ENCODE measurements at regions of chr10 and their contacts with region 1.

Region 1: DNA sequence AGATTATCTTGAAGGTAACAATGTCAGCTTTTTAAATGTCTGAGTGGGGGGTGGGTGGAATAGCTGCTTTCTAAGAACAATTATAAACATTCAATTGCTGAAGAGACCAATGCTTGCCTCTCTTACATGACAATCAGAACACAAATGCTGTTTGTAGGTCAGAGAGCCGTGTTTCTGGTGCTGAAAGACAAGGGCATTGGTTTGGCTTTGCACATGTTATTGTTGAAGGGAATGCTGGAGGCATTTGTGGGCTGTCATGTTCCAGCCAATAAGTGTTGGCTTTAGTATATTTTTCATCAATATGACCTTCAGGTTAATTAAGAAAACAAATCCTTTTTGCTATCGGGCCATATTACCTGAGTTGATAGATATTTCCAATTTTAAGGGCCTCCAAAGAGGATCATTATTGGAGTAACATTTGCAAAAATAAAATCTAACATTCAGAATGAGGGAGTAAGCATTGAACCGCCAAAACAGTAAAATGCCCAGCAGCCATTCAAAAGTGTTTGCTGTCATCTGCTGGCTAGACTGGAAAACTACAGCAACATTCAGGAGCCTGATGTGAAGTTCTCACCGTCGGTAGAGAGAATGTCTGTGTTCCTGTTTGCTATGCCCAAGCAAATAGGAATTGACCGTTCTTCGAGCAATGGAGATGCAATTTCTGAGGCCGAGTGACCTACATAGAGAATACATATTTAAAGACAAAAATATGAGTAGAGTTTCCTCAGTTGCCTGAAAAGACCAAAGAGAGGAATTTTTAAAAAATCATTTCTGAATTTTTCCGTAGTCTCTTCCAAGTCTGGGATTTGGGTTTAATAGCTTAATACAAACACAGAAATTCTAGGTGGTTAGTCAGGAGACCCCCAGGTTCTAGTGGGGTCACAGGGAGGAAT is 118.9 kb downstream of the APBB1IP start:
- DNase-seq: no peak
- ATAC-seq: peak; percentile 61

Region 2: GRCh38 chr10:25327273-25327672 is 1229.7 kb before region 1 on chr10:
- intact Hi-C with region 1: no loop called
- DNase-seq: no peak
- ATAC-seq: no peak

Region 3: GRCh38 chr10:25875556-25876165 is 681.3 kb before region 1 on chr10:
- intact Hi-C with region 1: loop called in 1 of 2 experiments (anchors 10 kb)
- DNase-seq: peak; percentile 42 to 78
- ATAC-seq: peak; percentile 68

Region 4: DNA sequence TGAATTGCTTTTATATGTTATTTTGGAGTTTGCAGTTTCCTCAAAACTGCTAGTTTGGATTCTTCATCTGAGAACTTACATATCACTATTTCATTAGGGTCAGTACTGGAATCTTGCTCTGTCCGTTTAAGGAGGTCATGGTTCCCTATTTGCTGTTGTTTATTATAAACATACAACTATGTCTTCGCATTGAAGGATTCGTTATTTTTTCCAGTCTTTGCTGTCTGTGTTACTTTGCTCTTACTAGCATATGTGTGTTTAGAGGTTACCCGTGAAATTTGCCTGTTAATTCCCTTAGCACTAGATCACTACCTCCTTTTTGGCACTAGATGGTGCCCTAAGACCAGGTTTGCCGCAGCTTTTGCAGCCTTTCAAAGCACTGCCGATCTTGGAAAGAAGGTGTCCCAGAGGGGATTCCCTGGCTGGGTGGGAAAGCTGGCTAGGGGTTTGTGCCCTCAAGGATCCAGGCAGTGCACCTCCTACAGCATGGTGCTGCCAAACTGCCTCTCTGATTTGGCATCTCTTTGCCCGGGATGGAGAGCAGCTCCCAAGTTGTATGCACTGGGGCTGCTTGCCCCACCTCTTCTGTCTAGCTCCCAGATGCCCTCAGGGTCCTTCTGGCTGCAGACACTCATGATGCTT is 221.9 kb before region 1 on chr10:
- intact Hi-C with region 1: loop called in 1 of 2 experiments (anchors 10 kb)
- DNase-seq: peak in 1 of 2 donors; percentile 39
- ATAC-seq: peak; percentile 71

Measured in left colon (tissue), 2 donors.